ENCODE measurements at regions of chr4 and their contacts with region 1.

Region 1: DNA sequence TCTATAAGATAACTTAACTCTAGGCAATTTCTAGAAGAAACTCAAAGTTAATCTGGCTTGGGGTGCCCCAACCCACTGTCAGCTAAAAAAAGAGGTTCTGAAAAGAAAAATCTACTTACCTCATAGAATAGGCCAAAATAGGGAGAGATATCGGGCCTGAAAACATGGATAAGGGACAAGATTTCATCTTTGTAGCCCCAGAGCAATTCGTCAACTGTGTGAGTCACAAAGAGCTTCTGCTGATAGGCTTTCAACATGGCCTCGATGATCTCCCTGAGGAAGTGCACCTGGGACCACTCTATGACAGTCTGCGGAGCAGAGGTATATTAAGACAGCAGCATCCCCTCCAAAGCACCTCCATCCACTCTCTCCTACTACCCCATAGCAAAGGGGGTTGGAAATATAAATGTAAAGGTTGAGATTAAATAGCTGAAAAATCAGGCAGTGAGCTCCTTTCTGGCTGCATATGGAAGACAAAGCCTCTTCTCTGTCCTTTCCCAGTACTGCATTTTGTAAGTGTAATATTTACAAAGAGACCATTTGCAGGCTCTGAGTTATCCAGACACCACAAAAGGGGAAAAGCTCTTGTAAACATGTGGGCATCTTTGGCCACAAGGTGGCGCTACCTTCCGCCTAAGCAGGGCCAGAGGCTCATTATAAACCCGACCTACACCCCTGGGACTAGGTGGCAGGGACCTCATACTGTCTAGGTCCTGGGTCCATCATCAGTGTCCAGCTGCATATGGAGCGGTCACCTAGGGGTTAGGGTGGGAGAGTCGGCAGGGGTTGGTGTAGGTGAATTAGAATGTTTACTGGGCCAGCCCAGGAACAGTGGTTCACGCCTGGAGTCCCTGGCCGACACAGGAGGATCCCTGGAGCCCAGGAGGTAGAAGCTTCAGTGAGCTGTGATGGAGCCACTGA is 31.5 kb upstream of the NUP54 start:
- DNase-seq: peak; percentile 77 to 93 (median 87)
- ATAC-seq: peak; percentile 65 to 89 (median 88)
- H3K4me3 ChIP-seq: no peak overlapping the region
- H3K27ac ChIP-seq: peak overlapping the region in 1 of 12 donors; percentile 11
- H3K4me1 ChIP-seq: peaks cover 0 to 30% (median 19%) of the 10 kb centered on the region in 12 donors
- H3K27me3 ChIP-seq: no peaks in the 10 kb centered on the region
- CTCF ChIP-seq: peak; percentile 85 to 97 (median 90)
- POLR2A ChIP-seq: no peak

Region 2: GRCh38 chr4:76251441-76252270 is 72.0 kb after region 1 on chr4 and contains the start of gene FAM47E:
- intact Hi-C with region 1: loop called in 6 of 10 experiments (anchors 5 to 10 kb)
- DNase-seq: peak; percentile 71 to 89 (median 87)
- ATAC-seq: peak; percentile 96 to 99 (median 99)
- H3K4me3 ChIP-seq: peak within 1 kb of the TSS; percentile 20 to 73 (median 63)
- H3K27ac ChIP-seq: peak within 1 kb of the TSS in 7 of 12 donors; percentile 4 to 62 (median 46)
- H3K4me1 ChIP-seq: peaks cover 0 to 17% (median 8%) of the 10 kb centered on the region in 12 donors
- H3K27me3 ChIP-seq: peaks cover 0 to 50% (median 0%) of the 10 kb centered on the region in 9 donors
- CTCF ChIP-seq: peak; percentile 9 to 59 (median 38)
- POLR2A ChIP-seq: peak in 1 of 2 donors; percentile 29
- total RNA-seq, gene FAM47E: 0.48 to 4.9 (median 2.5) TPM

Region 3: GRCh38 chr4:76305971-76306881 is 126.6 kb after region 1 on chr4 and contains the start of gene STBD1:
- intact Hi-C with region 1: loop called in 7 of 10 experiments (anchors 2 to 10 kb)
- DNase-seq: peak; percentile 80 to 91 (median 90)
- ATAC-seq: peak; percentile 86 to 89 (median 87)
- H3K4me3 ChIP-seq: peak within 1 kb of the TSS; percentile 47 to 95 (median 82)
- H3K27ac ChIP-seq: peak within 1 kb of the TSS; percentile 80 to 98 (median 92)
- H3K4me1 ChIP-seq: peaks cover 0 to 42% (median 20%) of the 10 kb centered on the region in 12 donors
- H3K27me3 ChIP-seq: no peaks in the 10 kb centered on the region
- CTCF ChIP-seq: peak in 1 of 12 donors; percentile 5
- POLR2A ChIP-seq: peak in 1 of 2 donors; percentile 61
- total RNA-seq, gene STBD1: 16.8 to 48.6 (median 25.5) TPM

Region 4: DNA sequence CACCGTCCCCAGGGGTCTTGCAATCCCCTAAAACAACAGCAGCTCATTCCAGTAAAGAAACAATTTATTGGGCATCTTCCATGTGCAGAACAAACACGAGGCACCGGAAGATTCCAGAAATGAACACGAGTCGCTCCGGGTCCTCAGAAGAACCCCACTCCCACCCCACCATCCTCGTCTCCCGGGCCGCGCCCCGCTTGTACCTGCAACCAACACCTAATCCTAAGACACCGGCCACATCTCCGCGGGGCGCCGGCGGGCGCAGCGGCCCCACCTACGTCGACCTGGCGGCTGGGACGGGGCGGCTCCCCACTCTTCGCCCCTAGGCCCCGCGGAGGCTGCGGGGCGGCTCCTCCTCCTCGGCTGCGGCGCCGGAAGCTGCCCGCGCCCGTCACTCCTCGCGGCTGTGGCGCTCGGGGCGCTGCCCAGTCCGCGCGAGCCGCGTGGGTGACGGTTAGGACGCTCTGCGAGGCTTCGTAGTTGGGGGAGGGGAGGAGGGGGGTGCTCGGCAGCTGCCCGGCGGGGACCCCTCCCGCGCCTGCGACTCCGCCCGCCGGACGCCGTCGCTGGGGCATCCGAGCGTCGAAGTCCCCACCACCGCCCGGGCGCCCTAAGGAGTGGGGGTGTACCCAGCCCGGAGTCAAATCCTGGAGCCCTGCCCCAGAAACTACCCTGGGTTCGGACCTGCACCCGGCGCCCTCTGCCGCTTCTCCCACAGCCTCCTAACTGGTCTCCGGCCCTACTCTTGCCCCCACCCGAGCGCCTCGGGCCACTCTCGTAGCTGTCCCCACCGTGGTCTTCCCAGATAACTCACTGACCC is 241.3 kb after region 1 on chr4 and contains the start of gene CCDC158:
- intact Hi-C with region 1: loop called in 3 of 10 experiments (anchors 5 to 10 kb)
- DNase-seq: peak in 3 of 5 donors; percentile 31 to 65 (median 36)
- ATAC-seq: peak; percentile 24 to 92 (median 71)
- H3K4me3 ChIP-seq: peak within 1 kb of the TSS; percentile 42 to 67 (median 56)
- H3K27ac ChIP-seq: peak within 1 kb of the TSS in 3 of 12 donors; percentile 2 to 38 (median 25)
- H3K4me1 ChIP-seq: peaks cover 0 to 12% (median 3%) of the 10 kb centered on the region in 12 donors
- H3K27me3 ChIP-seq: peaks cover 0 to 14% (median 0%) of the 10 kb centered on the region in 9 donors
- CTCF ChIP-seq: peak in 1 of 12 donors; percentile 13
- POLR2A ChIP-seq: no peak
- total RNA-seq, gene CCDC158: 0.09 to 0.75 (median 0.50) TPM in 7 of 9 donors, not detected in the others

Region 5: DNA sequence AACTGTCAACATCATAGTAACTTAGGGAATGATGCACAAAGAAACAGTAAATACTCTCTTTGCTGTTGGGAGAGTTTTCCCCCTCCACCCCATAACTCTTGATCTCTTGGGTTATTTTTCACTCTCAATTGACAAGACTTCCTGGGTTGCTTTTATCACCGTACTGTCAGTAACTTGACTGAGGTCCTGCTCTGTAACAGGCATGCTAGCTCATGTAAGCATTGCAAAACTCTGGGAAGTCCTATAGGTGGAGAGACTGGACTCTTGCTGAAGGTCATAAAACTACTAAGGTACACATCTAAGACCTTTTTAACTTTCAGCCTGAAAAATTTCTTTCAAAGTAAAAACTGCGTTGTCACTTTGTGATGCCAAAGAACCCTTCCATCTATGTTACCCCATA is 266.3 kb after region 1 on chr4:
- intact Hi-C with region 1: no loop called
- DNase-seq: no peak
- ATAC-seq: no peak
- H3K4me3 ChIP-seq: no peak overlapping the region
- H3K27ac ChIP-seq: no peak overlapping the region
- H3K4me1 ChIP-seq: peaks cover 0 to 17% (median 1%) of the 10 kb centered on the region in 12 donors
- H3K27me3 ChIP-seq: no peaks in the 10 kb centered on the region
- CTCF ChIP-seq: no peak
- POLR2A ChIP-seq: no peak

Region 6: DNA sequence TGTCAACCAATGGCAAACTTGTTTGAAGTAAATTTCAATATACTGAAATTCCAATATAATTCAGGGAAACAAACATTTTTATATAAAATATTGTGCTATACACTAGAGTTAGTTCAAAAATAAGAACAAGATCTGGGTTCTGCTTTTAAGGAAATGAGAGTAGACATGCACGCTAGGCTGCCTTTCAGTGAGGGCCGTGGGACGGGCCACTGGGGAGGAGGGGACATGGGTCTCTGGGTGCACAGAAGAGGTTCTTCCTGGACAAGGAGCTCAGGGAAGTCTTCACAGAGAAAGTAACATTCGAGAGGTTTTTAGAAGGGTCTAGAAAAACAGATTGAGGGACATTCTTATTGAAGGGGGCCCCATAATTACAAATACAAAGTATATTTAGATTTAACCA is 319.8 kb after region 1 on chr4:
- intact Hi-C with region 1: loop called in 5 of 10 experiments (anchors 2 to 10 kb)
- DNase-seq: no peak
- ATAC-seq: no peak
- H3K4me3 ChIP-seq: no peak overlapping the region
- H3K27ac ChIP-seq: no peak overlapping the region
- H3K4me1 ChIP-seq: peaks cover 0 to 8% (median 0%) of the 10 kb centered on the region in 12 donors
- H3K27me3 ChIP-seq: no peaks in the 10 kb centered on the region
- CTCF ChIP-seq: no peak
- POLR2A ChIP-seq: no peak

Measured in heart left ventricle (tissue), 16 donors.